Posterior cingulate gyrus (tissue), 11 donors: ENCODE measurements at regions of chr21 and their contacts with region 1.

Region 1: DNA sequence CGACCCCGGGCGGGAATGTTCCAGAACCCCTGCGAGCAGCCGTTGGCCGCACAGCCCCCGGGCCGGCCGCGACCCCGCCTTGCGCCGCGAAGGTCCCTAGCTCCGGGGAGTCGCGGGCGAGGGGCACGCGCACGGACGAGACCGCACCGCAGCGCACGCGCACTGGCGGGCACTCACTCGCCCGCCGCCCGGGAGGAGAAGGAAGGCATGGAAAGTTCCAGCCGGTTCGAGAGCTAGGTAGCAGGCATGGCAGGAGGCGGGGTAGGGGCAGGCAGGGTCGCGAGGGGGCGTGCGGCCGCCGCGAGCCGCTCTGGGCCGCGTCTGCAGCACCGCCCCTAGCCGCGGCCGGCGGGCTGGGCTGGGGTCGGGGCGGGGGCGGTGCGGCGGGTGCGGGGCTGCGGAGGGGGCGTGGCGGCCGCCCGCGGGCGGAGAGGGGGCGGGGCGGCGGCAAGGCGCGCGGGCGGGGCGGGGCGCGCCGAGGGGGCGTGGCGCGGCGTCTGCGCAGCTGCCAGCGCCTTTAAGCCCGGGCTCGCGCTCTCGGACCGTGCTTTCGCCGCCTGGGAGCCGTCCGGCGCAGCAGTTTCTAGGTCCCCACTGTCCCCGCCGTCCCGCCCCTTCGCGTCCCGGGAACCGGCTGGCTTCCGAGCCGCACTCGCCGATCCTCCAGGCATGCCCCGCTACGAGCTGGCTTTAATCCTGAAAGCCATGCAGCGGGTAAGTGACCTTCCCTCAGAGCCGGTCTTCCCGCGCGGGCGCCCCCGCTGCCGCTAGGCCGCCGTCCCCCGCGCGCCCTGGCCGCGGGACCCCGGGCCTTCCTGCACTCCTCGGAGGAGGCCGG is at the starts of genes MRPS6 and SLC5A3:
- DNase-seq: peak; percentile 67 to 97 (median 78)

Region 2: DNA sequence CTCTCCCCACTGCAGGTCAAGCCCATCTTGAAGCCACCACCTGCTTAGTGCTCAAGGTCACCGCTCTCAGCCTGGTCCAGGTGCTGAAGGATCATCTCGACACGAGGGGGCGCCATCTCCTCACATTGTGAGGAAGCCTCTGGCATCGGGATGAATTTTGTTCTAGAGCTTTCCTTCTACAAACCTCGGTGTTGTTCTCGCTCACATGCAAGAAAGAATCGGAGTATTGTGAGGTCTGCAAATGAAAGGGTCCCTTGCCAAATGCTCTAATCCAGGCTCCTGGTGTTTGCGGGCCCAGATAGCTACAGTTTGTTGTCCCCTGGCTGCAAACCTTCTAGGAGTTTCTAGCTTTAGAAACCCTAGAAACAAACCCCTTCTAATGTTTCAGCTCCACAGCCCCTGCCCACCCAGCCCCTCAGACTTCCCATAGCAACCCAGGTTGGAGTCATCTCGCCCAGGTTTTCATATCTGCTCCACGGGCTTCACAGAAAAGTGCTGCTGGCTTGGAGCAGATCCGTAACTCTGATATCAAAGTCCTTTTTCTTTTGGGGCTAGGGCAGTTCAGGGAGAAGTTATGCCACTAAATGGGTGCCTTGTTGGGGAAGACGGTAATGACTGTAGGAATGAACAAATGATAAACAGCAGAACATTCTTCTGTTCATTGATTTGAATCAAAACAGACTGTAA is 149.0 kb before region 1 on chr21:
- intact Hi-C with region 1: loop called (anchors 2 kb)
- DNase-seq: peak; percentile 82 to 98 (median 93)

Region 3: GRCh38 chr21:34129039-34129891 is 56.0 kb after region 1 on chr21:
- intact Hi-C with region 1: loop called (anchors 10 kb)
- DNase-seq: peak in 7 of 10 donors; percentile 33 to 91 (median 62)

Region 4: DNA sequence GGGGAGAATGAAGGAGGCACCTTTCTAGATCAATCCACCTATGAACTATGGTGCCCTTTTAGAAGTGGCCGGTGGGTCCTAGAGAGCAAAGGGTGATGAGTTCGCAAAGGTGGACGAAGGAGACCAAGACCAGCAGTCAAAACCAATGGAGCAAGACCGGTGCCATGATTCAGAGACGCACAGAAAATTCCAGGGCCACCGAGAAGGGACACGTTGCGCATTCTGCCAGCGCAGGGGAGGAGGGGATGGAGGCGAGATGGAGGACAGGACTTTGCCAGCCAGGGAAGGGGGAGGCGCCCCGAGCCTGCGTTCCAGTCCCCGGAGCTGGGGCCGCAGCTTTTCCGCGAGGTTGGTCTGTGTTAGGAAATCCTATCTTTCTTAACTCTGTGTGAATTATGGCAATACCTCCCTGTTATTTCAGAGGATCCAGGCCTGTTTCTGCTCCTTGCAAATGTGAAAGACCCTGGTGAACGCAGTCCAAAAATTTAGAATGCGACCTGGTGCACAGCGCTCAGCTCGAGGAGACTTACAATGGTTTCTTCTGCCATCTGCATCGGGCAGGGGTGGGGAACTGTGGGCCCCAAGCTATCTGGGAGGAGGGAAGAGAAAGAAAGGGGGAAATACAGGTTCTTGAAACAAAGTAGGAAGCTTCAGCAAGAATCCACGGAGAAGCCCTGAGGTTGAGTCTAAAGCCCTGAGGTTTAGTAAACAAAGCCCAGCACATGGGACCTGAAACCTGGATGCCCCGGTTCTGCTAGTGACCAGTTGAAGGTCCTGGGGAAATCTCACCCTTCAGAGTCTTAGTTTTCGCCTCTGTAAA is 129.5 kb after region 1 on chr21:
- intact Hi-C with region 1: loop called (anchors 1 kb)
- DNase-seq: peak in 2 of 10 donors; percentile 30 to 79

Region 5: GRCh38 chr21:34345091-34345871 is 272.0 kb after region 1 on chr21:
- intact Hi-C with region 1: loop called (anchors 5 kb)
- DNase-seq: no peak